CD4-positive, alpha-beta T cell (primary cell): ENCODE measurements at regions of chr4 and their contacts with region 1.

Region 1: DNA sequence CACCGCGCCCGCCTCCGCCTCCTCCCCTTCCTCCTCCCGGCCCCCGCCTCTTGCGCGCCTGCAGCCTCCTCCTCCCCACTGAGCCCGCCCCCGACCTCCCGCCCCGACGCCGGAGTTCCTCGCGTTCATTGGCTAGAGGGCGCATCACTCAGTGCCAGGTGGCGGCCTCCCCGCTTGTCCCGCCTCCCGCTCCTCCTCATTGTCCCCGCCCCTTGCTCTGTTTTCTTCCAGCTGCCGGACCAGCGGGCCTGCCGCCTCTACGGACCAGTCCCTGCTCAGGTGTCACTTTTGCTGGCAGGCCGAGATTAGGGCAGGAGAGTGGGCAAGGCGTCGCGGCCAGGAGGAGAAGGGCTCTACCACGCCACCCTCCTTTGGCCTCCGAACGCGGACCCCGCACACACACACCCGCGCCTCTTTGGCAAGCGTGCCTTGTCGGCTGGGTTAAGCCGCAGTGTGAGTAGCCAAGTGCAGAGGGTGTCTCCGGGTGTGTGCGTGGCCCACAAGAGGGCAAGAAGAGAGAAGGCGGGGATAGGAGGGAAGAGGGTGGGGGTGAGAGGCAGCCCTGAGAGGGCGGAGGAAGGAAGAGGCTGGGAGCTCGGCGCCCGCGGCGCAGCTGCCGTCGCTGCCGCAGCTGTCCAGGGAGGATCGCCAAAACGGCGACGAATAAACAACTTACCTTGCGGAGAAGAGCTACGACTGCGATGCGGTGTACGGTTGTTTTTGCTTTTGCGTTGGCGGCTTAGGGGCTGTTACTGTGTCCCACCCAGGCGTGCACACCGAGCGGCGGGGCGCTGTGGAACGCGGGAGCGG is 436 bp upstream of the PPP3CA start:
- DNase-seq: peak; percentile 98 to 100 (median 99)
- ATAC-seq: peak; percentile 84
- H3K4me3 ChIP-seq: peak overlapping the region; percentile 86
- H3K4me3 Mint-ChIP-seq: peak overlapping the region; percentile 100
- H3K27ac ChIP-seq: peak overlapping the region; percentile 78 to 84
- H3K27ac Mint-ChIP-seq: peak overlapping the region; percentile 94
- H3K4me1 ChIP-seq: peaks cover 15% of the 10 kb centered on the region
- H3K4me1 Mint-ChIP-seq: peaks cover 38% of the 10 kb centered on the region
- H3K27me3 ChIP-seq: peaks cover 0 to 7% of the 10 kb centered on the region in 2 experiments
- H3K27me3 Mint-ChIP-seq: peaks cover 36% of the 10 kb centered on the region
- CTCF ChIP-seq: no peak

Region 2: GRCh38 chr4:101187841-101188240 is 159.9 kb before region 1 on chr4:
- CTCF ChIA-PET with region 1: interaction called, 3 read pairs
- POLR2A ChIA-PET with region 1: no interaction called
- intact Hi-C with region 1: loop called in 1 of 2 experiments (anchors 2 kb)
- DNase-seq: peak in 3 of 14 experiments; percentile 27 to 34 (median 31)
- ATAC-seq: no peak
- H3K4me3 ChIP-seq: no peak overlapping the region
- H3K4me3 Mint-ChIP-seq: no peak overlapping the region
- H3K27ac ChIP-seq: no peak overlapping the region
- H3K27ac Mint-ChIP-seq: no peak overlapping the region
- H3K4me1 ChIP-seq: no peaks in the 10 kb centered on the region
- H3K4me1 Mint-ChIP-seq: peaks cover 17% of the 10 kb centered on the region
- H3K27me3 ChIP-seq: no peaks in the 10 kb centered on the region
- H3K27me3 Mint-ChIP-seq: no peaks in the 10 kb centered on the region
- CTCF ChIP-seq: no peak

Region 3: GRCh38 chr4:101328063-101328602 is 19.6 kb before region 1 on chr4:
- CTCF ChIA-PET with region 1: interaction called, 4 read pairs
- POLR2A ChIA-PET with region 1: interaction called, 48 read pairs
- intact Hi-C with region 1: loop called in 1 of 2 experiments (anchors 1 kb)
- DNase-seq: peak in 4 of 14 experiments; percentile 24 to 80 (median 72)
- ATAC-seq: peak; percentile 87
- H3K4me3 ChIP-seq: peak overlapping the region; percentile 15
- H3K4me3 Mint-ChIP-seq: peak overlapping the region; percentile 23
- H3K27ac ChIP-seq: peak overlapping the region in 1 of 2 donors; percentile 18
- H3K27ac Mint-ChIP-seq: peak overlapping the region; percentile 76
- H3K4me1 ChIP-seq: peaks cover 19% of the 10 kb centered on the region
- H3K4me1 Mint-ChIP-seq: peaks cover 69% of the 10 kb centered on the region
- H3K27me3 ChIP-seq: no peaks in the 10 kb centered on the region
- H3K27me3 Mint-ChIP-seq: peaks cover 10% of the 10 kb centered on the region
- CTCF ChIP-seq: no peak

Region 4: DNA sequence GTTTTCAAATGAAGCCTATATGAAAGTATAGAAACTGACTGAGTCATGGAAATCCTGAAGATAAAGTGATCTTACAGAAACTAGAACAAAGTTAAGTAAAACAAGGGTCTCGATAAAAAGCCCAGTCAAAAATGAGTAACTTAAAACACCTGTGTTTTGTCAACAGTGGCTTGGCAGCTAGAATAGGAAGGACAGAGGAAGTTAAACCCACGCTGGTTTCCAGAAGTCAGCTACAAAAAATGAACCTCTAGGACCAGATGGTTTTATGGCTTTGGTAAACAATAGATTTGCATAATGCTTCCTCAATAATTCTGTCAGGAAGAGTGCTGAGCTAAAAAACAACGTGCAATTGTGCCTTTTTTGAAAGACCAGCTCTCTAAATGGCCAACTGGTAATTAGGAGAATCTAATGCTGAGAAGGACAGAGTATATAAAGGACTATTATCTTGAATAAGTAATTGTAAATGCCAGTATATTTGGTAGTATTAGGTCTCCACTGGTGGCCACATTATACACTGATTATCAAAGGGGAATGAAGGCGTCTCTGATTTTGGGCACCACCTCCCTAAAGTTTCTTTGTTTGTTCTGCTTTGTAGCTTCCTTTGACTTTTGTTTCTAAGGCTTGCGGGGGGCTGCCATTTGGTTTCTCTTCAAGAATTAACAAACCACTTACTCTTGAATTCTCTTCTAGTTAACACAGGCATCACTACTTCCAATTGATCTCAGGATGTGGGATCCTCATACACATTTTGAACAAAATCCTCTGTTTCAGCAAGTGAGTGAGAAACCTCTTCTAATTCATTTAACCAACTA is 71.8 kb after region 1 on chr4:
- CTCF ChIA-PET with region 1: interaction called, 3 read pairs
- POLR2A ChIA-PET with region 1: interaction called, 34 read pairs
- intact Hi-C with region 1: loop called (anchors 5 kb)
- DNase-seq: no peak
- ATAC-seq: no peak
- H3K4me3 ChIP-seq: no peak overlapping the region
- H3K4me3 Mint-ChIP-seq: no peak overlapping the region
- H3K27ac ChIP-seq: no peak overlapping the region
- H3K27ac Mint-ChIP-seq: no peak overlapping the region
- H3K4me1 ChIP-seq: peaks cover 29% of the 10 kb centered on the region
- H3K4me1 Mint-ChIP-seq: peaks cover 34% of the 10 kb centered on the region
- H3K27me3 ChIP-seq: peaks cover 19 to 29% of the 10 kb centered on the region in 2 experiments
- H3K27me3 Mint-ChIP-seq: peaks cover 59% of the 10 kb centered on the region
- CTCF ChIP-seq: no peak

Region 5: GRCh38 chr4:102344954-102345794 is 997.4 kb after region 1 on chr4 and contains the start of gene SLC39A8:
- CTCF ChIA-PET with region 1: no interaction called
- POLR2A ChIA-PET with region 1: no interaction called
- intact Hi-C with region 1: loop called (anchors 2 to 10 kb)
- DNase-seq: peak; percentile 71 to 95 (median 81)
- ATAC-seq: peak; percentile 80
- H3K4me3 ChIP-seq: peak within 1 kb of the TSS; percentile 82
- H3K4me3 Mint-ChIP-seq: peak within 1 kb of the TSS; percentile 87
- H3K27ac ChIP-seq: peak within 1 kb of the TSS; percentile 88 to 93
- H3K27ac Mint-ChIP-seq: peak within 1 kb of the TSS; percentile 88
- H3K4me1 ChIP-seq: peaks cover 25% of the 10 kb centered on the region
- H3K4me1 Mint-ChIP-seq: peaks cover 47% of the 10 kb centered on the region
- H3K27me3 ChIP-seq: no peaks in the 10 kb centered on the region
- H3K27me3 Mint-ChIP-seq: no peaks in the 10 kb centered on the region
- CTCF ChIP-seq: peak; percentile 95
- total RNA-seq, gene SLC39A8: 17.9 to 18.0 TPM